Aorta (tissue), 5 donors: ENCODE measurements at regions of chr18 and their contacts with region 1.

Region 1: GRCh38 chr18:31057051-31057450 is 14.5 kb upstream of the DSC3 start:
- DNase-seq: no peak
- ATAC-seq: no peak
- H3K4me3 ChIP-seq: no peak overlapping the region
- H3K27ac ChIP-seq: no peak overlapping the region
- H3K4me1 ChIP-seq: no peaks in the 10 kb centered on the region
- H3K27me3 ChIP-seq: no peaks in the 10 kb centered on the region

Region 2: DNA sequence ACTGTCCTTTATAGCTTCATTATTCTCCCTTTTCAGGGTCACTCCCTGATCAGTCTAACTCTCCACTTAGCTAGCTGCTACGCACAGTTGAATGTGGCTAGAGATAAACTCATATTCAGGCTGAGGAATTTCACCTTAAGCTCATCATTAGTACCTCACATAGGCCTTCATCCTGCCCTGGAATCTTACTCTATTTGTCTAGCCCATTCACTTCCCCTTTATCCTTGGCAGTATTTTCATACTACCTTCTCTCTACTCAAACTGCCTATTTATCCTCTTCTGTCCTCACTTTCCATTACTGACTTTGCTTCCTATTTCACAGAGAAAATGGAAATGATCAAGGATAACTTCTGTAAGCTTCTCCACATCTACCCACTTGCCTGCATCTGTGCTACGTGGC is 55.8 kb after region 1 on chr18:
- intact Hi-C with region 1: loop called in 1 of 2 experiments (anchors 10 kb)
- DNase-seq: no peak
- ATAC-seq: no peak
- H3K4me3 ChIP-seq: no peak overlapping the region
- H3K27ac ChIP-seq: no peak overlapping the region
- H3K4me1 ChIP-seq: no peaks in the 10 kb centered on the region
- H3K27me3 ChIP-seq: peaks cover 0 to 2% of the 10 kb centered on the region in 2 donors